ENCODE measurements at regions of chr17 and their contacts with region 1.

Region 1: DNA sequence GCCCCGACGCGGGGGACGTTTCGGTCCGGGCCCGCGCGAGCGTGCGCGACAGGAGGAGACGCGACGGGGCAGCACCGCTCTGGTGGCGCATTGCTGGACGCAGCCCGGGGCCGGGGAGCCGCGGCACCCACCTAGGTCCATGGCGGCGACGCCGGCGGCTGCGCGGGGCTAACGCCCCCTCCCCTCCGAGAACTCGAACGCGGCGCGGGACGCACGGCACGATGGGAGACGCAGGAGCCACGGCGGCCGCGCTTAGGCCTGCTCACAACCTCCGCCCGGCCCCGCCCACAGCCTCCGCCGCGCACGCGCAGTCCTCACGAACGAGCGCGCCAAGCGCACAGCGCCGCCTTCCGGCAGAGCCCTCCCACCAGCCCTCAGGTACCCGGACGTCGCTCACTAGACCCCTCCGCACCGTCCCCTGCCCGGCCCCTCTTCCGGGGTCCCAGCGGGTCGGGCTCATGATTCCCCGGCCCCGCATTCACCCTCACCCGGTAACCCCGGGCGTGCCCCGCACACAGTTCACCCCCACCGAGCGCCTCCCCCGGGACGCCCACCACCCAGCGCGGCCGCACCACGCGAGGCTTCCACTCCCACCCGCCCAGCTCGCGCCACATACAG is at the start of gene GEMIN4:
- DNase-seq: peak; percentile 100
- H3K4me3 Mint-ChIP-seq: peak within 1 kb of the TSS; percentile 100
- H3K27ac Mint-ChIP-seq: peak within 1 kb of the TSS; percentile 98
- H3K4me1 Mint-ChIP-seq: peaks cover 35% of the 10 kb centered on the region
- H3K27me3 Mint-ChIP-seq: no peaks in the 10 kb centered on the region
- total RNA-seq, gene GEMIN4: 71.4 and 80.3 TPM in 2 replicates

Region 2: GRCh38 chr17:409848-410545 is 342.1 kb before region 1 on chr17:
- intact Hi-C with region 1: loop called (anchors 2 kb)
- DNase-seq: peak; percentile 100
- H3K4me3 Mint-ChIP-seq: peak overlapping the region; percentile 93
- H3K27ac Mint-ChIP-seq: peak overlapping the region; percentile 100
- H3K4me1 Mint-ChIP-seq: peaks cover 57% of the 10 kb centered on the region
- H3K27me3 Mint-ChIP-seq: peaks cover 5% of the 10 kb centered on the region

Region 3: GRCh38 chr17:716238-716637 is 35.9 kb before region 1 on chr17:
- intact Hi-C with region 1: loop called (anchors 1 kb)
- DNase-seq: no peak
- H3K4me3 Mint-ChIP-seq: peak overlapping the region; percentile 37
- H3K27ac Mint-ChIP-seq: no peak overlapping the region
- H3K4me1 Mint-ChIP-seq: peaks cover 20% of the 10 kb centered on the region
- H3K27me3 Mint-ChIP-seq: peaks cover 2% of the 10 kb centered on the region

Region 4: DNA sequence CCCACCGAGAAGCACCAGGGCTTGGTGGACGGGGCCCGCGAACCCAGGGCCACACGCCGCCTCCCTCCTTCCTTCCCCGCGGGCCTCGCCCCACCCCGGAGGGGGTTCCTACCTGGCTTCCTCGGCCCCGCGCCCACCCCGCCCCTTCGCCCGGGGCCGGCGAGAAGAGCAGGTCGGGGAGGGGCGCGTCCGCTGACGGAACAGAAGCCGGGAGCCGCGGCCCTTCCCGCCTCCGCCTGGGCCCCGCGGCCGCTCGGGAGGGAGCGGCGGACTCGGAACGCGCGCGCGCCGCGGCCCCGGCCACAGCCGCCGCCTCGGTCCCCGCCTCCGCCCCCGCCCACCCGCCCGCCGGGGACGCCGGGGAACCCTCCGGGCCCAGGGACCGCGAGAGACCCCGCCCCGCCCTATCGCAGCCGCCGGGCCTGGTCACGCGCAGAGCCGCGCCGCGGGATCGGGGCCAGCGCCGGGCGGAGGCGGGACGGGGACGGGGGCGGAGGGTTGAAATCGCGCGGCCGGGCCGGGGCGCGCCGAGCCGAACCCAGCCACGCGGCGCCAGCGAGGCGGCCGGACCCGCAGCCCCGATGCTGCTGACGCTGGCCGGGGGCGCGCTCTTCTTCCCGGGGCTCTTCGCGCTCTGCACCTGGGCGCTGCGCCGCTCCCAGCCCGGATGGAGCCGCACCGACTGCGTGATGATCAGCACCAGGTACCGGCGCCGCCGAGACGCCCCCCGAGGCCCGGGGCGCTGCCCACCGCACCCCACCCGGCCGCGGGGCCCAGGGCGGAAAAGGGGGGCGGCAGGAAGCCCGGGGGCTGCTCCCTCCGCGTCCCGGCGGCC is 19.8 kb before region 1 on chr17 and contains the start of gene TLCD3A:
- intact Hi-C with region 1: loop called (anchors 1 kb)
- DNase-seq: peak; percentile 91
- H3K4me3 Mint-ChIP-seq: peak within 1 kb of the TSS; percentile 93
- H3K27ac Mint-ChIP-seq: peak within 1 kb of the TSS; percentile 94
- H3K4me1 Mint-ChIP-seq: peaks cover 22% of the 10 kb centered on the region
- H3K27me3 Mint-ChIP-seq: peaks cover 4% of the 10 kb centered on the region
- total RNA-seq, gene TLCD3A: 42.3 and 43.1 TPM in 2 replicates

Region 5: GRCh38 chr17:781805-782731 is 30.0 kb after region 1 on chr17 and contains the starts of genes GLOD4 and MRM3:
- intact Hi-C with region 1: loop called (anchors 1 kb)
- DNase-seq: peak; percentile 100
- H3K4me3 Mint-ChIP-seq: peak within 1 kb of the TSS; percentile 96
- H3K27ac Mint-ChIP-seq: peak within 1 kb of the TSS; percentile 92
- H3K4me1 Mint-ChIP-seq: peaks cover 26% of the 10 kb centered on the region
- H3K27me3 Mint-ChIP-seq: no peaks in the 10 kb centered on the region
- total RNA-seq, gene GLOD4: 82.4 and 83.2 TPM in 2 replicates
- total RNA-seq, gene MRM3: 32.5 and 33.1 TPM in 2 replicates

Region 6: DNA sequence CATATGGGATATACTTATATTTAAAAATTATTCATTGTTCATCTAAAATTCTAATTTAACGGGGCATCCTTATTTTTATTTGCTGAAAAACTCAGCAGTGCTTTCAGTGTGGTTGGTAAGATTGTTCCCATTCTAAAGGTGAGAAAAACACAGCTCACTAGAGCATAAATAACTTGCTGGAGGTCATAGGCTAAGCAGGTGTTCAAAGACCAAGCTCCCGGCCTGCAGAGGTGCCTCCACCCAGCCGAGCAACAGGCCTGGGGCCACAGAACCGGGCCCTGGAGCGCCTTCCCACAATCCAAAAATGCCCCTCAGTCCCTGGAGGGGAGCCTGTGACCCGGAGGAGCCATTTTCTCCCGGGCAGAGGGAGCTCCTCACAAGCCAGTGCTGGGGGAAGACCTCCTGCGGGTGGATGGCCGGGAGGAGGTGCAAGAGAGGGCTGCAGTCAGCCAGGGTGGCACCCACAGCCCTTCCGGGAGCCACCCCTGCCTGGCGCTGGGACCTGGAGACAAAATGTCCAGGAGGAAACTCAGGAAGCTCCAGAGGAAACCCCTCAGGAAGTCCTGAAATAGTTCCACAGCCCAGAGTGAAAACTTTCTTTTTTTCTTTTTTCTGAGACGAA is 412.9 kb after region 1 on chr17:
- intact Hi-C with region 1: no loop called
- DNase-seq: no peak
- H3K4me3 Mint-ChIP-seq: no peak overlapping the region
- H3K27ac Mint-ChIP-seq: no peak overlapping the region
- H3K4me1 Mint-ChIP-seq: no peaks in the 10 kb centered on the region
- H3K27me3 Mint-ChIP-seq: no peaks in the 10 kb centered on the region

Measured in activated CD4-positive, alpha-beta T cell treated with anti-CD3 and anti-CD28 coated beads, Interleukin-2, amount 10 ng/mL, durations not matched to agents 24 days and 14 days (primary cell).